Right ventricle myocardium inferior (tissue), 1 donor: ENCODE measurements at regions of chr12 and their contacts with region 1.

Region 1: GRCh38 chr12:2561367-2561766 is 233.4 kb upstream of the FKBP4 start:
- DNase-seq: no peak
- ATAC-seq: no peak

Region 2: GRCh38 chr12:2256915-2257314 is 304.5 kb before region 1 on chr12:
- intact Hi-C with region 1: no loop called
- DNase-seq: no peak
- ATAC-seq: no peak

Region 3: DNA sequence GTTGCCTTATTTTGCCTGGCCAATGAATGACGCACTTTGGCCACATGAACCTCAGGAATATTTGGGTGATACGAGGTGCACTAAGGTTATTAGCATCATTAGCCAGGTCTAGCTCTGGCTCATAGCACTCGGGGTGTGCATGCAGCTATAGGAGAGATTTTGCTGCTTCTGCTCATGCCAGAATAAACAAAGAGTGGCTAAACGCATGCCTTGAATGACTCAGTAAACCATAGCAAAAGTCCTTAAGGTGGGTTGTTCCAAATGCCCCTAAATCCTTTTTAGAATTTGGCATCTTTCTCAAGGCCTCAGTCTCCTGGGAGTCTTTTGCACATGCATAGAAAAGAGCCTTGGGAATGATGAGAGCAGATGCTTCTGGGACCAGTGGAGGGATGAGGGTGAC is 110.3 kb before region 1 on chr12:
- intact Hi-C with region 1: loop called (anchors 10 kb)
- DNase-seq: no peak
- ATAC-seq: no peak

Region 4: GRCh38 chr12:2501464-2502191 is 59.7 kb before region 1 on chr12:
- intact Hi-C with region 1: loop called (anchors 5 kb)
- DNase-seq: no peak
- ATAC-seq: peak; percentile 58